ENCODE measurements at regions of chr3 and their contacts with region 1.

Region 1: GRCh38 chr3:168511428-168512014 is 415.8 kb upstream of the GOLIM4 start:
- DNase-seq: no peak
- ATAC-seq: no peak

Region 2: DNA sequence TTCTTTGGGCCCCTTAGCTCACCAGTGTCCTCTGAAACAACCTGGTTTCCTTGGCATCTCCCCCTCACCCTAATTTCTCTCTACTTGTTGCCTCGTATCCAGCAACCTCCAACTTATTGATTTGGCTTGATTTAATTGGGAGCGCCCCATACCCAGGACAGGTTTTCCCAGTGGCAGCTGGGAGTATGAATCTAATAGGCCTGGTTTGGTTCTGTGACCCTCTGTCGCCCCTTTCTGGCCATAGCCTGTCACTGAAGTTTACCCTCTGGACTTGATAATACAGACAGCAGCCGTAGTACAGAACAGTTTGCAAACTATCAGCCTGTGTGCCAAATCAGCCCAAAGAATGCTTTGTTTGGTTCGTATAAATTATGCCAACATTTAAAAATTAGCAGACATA is 109.3 kb after region 1 on chr3:
- intact Hi-C with region 1: loop called (anchors 10 kb)
- DNase-seq: no peak
- ATAC-seq: peak; percentile 59

Region 3: DNA sequence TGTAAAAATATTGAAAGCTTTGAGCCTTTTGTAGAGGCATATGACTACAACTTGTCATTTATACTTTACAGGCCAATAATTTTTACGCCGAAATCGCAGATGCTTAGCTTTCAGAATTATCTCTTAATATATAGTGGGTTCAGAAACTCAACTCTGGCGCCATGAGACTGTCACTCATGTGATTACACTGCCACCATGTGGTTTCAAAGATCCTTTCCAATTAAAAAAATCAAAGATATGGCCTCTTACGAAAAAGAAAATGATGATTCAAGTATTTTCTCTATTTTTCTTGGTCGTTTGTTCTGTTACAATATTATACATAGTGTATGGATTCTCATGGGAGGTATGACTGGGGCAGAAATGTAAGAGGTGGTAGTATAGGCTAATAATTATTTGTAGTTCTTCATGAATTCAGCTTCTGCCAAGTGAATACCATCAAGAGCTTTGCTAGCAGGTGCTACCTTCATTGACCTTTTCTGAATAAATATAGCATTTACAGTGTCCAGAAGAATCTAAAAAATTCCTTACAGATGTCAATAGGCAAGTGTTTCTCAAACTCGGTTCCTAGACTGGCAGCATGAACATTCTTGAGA is 335.9 kb after region 1 on chr3:
- intact Hi-C with region 1: loop called (anchors 5 kb)
- DNase-seq: no peak
- ATAC-seq: peak; percentile 59

Measured in Right ventricle myocardium superior (tissue), 1 donor.